SK-N-SH (cell line): ENCODE measurements at regions of chr11 and their contacts with region 1.

Region 1: DNA sequence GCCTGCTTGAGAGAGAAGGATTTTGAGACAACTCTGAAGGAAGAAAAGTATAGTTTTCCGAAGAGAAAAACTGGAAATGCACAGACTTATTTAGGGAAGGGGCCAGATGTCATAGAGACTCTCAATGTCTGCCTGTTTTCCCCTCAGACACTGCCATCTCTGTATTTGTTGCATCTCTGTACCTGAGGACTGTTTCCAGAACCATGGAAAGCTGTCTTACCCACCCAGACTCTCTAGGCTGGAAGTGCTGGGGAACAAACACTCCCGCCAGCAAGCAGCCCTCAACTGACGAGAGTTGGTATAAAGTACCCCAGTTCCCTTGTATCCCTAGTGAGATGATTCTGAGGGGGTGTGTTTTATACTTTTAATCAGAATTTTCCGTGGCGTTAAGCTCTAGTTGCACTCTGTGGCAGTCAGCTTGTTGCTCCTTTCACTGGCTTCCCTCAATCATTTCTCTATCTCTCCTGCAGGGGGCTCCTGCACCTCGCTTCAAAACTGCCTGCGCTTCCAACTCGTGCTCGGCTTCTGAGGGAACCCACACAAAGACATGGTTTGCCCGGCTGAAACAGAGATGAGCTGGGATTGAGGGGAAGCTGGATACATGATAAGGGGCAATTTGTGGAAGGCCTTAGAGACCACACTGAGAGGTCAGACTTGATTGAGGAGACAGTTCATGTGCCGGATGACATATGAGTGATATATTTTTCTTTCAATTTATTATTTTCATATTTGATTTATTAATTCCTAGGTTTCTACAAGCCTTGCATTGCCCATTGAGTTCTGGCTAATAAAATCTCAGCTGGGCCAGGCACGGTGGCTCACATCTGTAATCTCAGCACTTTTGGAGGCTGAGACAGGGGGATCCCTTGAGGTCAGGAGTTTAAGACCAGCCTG is 36.9 kb upstream of the CLPB start:
- DNase-seq: peak; percentile 76
- H3K4me3 ChIP-seq: peak overlapping the region in 1 of 2 experiments; percentile 17; a peak in 1 of 4 replicates
- H3K27ac ChIP-seq: no peak overlapping the region
- H3K4me1 ChIP-seq: no peaks in the 10 kb centered on the region; a peak in 1 of 4 replicates
- H3K27me3 ChIP-seq: peaks cover 14% of the 10 kb centered on the region
- CTCF ChIP-seq: peak; percentile 81
- EP300 ChIP-seq: no peak
- RAD21 ChIP-seq: peak; percentile 87

Region 2: DNA sequence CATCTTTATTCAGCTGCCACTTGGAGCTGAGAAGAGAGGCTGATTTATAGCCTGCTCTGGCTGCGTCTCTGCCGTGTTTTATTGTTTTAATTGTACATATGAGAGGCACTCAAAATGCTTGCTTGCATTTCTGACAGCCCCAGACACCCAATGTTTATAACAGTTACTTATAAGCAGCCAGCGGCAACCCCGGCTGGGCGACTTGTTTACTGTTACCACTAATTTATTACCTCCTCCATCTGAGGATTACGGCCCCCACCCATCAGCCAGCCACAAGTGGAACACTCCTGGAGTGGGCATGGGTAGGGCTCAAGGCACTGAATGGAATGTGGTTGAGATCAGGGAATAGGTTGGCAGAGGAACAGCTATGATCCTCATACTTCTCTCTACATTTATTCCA is 98.1 kb before region 1 on chr11:
- CTCF ChIA-PET with region 1: no interaction called
- POLR2A ChIA-PET with region 1: no interaction called
- DNase-seq: no peak
- H3K4me3 ChIP-seq: no peak overlapping the region
- H3K27ac ChIP-seq: peak overlapping the region in 1 of 2 experiments; percentile 99; a peak in 2 of 4 replicates
- H3K4me1 ChIP-seq: peaks cover 20 to 44% of the 10 kb centered on the region in 2 experiments
- H3K27me3 ChIP-seq: no peaks in the 10 kb centered on the region
- CTCF ChIP-seq: no peak
- EP300 ChIP-seq: 0 out of 4 replicates have a peak, but pooled peaks of 1 of the 2 experiments have one; percentile 13
- RAD21 ChIP-seq: no peak

Region 3: GRCh38 chr11:72446902-72447769 is 24.1 kb before region 1 on chr11:
- CTCF ChIA-PET with region 1: interaction called, 40 read pairs
- POLR2A ChIA-PET with region 1: no interaction called
- DNase-seq: peak; percentile 72
- H3K4me3 ChIP-seq: no peak overlapping the region; a peak in 1 of 4 replicates
- H3K27ac ChIP-seq: no peak overlapping the region
- H3K4me1 ChIP-seq: no peaks in the 10 kb centered on the region; a peak in 1 of 4 replicates
- H3K27me3 ChIP-seq: no peaks in the 10 kb centered on the region; the same call in 1 of the 2 replicates
- CTCF ChIP-seq: peak; percentile 87
- EP300 ChIP-seq: no peak
- RAD21 ChIP-seq: peak; percentile 88

Region 4: GRCh38 chr11:72483412-72484186 is 12.3 kb after region 1 on chr11:
- CTCF ChIA-PET with region 1: interaction called, 19 read pairs
- POLR2A ChIA-PET with region 1: no interaction called
- DNase-seq: no peak
- H3K4me3 ChIP-seq: no peak overlapping the region
- H3K27ac ChIP-seq: no peak overlapping the region
- H3K4me1 ChIP-seq: no peaks in the 10 kb centered on the region; a peak in 1 of 4 replicates
- H3K27me3 ChIP-seq: no peaks in the 10 kb centered on the region; the same call in 1 of the 2 replicates
- CTCF ChIP-seq: no peak
- EP300 ChIP-seq: no peak
- RAD21 ChIP-seq: no peak

Region 5: DNA sequence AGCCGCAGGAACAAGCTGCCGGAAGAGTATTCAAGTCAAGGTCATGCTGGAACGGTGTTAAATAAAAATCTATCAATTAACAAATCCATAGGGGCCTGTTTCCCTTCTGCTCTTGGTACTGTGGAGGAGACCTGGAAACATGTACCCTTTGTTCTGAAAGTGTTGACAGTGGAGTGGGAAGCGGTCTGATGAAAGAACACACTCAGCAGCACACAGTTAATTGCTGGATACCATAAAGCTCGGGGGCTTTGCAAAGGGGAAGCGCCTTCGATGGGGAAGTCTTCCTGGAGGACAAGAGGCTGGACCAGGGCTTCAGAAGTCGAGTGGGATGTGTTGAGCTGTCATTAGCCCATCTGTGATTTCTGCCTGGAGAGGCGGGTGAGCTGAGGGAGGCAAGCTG is 75.6 kb after region 1 on chr11:
- CTCF ChIA-PET with region 1: interaction called, 24 read pairs
- POLR2A ChIA-PET with region 1: no interaction called
- DNase-seq: no peak
- H3K4me3 ChIP-seq: no peak overlapping the region
- H3K27ac ChIP-seq: no peak overlapping the region
- H3K4me1 ChIP-seq: peaks cover 0 to 19% of the 10 kb centered on the region in 2 experiments; a peak in 2 of 4 replicates
- H3K27me3 ChIP-seq: peaks cover 14% of the 10 kb centered on the region; the same call in 1 of the 2 replicates
- CTCF ChIP-seq: no peak
- EP300 ChIP-seq: no peak
- RAD21 ChIP-seq: no peak

Region 6: DNA sequence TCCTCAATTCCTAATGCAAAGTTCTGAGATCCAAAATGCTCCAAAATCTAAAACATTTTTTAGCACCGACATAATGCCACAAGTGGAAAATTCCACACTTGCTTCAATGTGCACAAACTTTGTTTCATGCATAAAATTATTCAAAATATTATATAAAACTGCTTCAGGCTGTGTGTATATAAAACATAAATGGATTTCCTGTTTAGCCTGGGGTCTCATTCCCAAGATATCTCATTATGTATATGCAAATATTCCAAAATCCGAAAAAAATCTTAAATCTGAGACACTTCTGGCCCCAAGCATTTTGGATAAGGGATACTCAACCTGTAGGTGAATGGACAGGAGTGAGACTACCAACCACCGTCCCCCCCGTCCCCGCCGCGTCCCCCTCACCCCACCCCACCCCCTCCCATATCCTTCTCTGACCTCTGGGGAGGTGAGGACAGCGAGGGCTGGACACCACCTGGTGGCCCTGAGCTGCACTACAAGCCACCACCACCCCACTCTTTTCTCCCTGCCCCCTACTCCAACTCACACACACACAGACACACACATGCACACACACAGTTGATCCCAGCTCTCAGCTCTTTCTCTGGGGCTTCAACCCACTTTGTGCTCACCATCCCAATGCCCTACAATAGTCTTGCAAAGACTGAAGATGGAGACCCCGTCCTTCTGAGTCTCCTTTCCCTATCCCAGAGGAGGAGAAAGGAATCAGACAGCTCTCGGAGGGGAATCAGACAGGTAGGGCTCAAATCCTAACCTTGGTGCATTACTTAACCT is 102.0 kb after region 1 on chr11:
- CTCF ChIA-PET with region 1: interaction called, 267 read pairs
- POLR2A ChIA-PET with region 1: no interaction called
- DNase-seq: peak; percentile 92
- H3K4me3 ChIP-seq: no peak overlapping the region
- H3K27ac ChIP-seq: no peak overlapping the region
- H3K4me1 ChIP-seq: no peaks in the 10 kb centered on the region; a peak in 3 of 4 replicates
- H3K27me3 ChIP-seq: no peaks in the 10 kb centered on the region
- CTCF ChIP-seq: peak; percentile 64
- EP300 ChIP-seq: no peak
- RAD21 ChIP-seq: peak; percentile 78

Region 7: GRCh38 chr11:72642884-72643511 is 171.7 kb after region 1 on chr11:
- CTCF ChIA-PET with region 1: interaction called, 14 read pairs
- POLR2A ChIA-PET with region 1: no interaction called
- DNase-seq: peak; percentile 92
- H3K4me3 ChIP-seq: peak overlapping the region; percentile 42 to 61
- H3K27ac ChIP-seq: no peak overlapping the region
- H3K4me1 ChIP-seq: peaks cover 5 to 16% of the 10 kb centered on the region in 2 experiments; a peak in 1 of 4 replicates
- H3K27me3 ChIP-seq: peaks cover 30% of the 10 kb centered on the region
- CTCF ChIP-seq: peak; percentile 76
- EP300 ChIP-seq: no peak
- RAD21 ChIP-seq: peak; percentile 85